CD8-positive, alpha-beta T cell (primary cell): ENCODE measurements at regions of chr16 and their contacts with region 1.

Region 1: GRCh38 chr16:67816240-67817031 is 9.7 kb downstream of the TSNAXIP1 start:
- DNase-seq: peak; percentile 79 to 96 (median 90)
- ATAC-seq: peak; percentile 99
- H3K4me3 ChIP-seq: no peak overlapping the region
- H3K4me3 Mint-ChIP-seq: peak overlapping the region; percentile 66
- H3K27ac ChIP-seq: no peak overlapping the region
- H3K27ac Mint-ChIP-seq: no peak overlapping the region
- H3K4me1 ChIP-seq: peaks cover 4% of the 10 kb centered on the region
- H3K4me1 Mint-ChIP-seq: peaks cover 5% of the 10 kb centered on the region
- H3K27me3 ChIP-seq: no peaks in the 10 kb centered on the region
- H3K27me3 Mint-ChIP-seq: no peaks in the 10 kb centered on the region
- CTCF ChIP-seq: peak; percentile 100

Region 2: DNA sequence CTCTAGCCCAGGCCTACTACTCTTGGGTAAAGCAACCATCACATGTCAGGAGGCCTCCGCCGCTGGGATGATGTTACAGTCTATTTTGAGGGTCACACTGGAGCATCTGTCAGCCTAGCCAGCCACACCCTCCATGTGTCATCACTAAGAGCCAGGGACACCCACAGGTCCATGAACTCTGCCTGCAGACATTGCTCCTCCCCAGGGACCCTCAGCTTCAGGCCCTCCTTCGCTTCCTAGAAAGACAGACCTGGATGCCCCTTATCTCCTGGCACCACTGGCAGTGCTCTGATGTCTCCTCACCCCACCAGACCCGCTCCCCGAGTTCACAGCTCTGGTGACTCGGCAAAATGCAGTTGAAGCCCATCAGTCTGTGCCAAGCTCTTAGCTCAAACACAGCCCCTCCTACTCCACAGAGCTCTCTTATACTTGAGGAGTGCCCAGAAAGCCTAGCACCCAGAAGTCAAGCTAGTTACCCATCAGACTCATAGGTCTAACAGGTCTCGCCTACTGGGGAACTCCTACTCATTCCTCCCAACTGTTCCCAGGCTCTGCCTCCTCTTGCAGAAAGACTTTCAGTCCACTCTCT is 16.0 kb before region 1 on chr16:
- CTCF ChIA-PET with region 1: interaction called, 48 read pairs
- POLR2A ChIA-PET with region 1: interaction called, 3 read pairs
- intact Hi-C with region 1: no loop called
- DNase-seq: no peak
- ATAC-seq: no peak
- H3K4me3 ChIP-seq: no peak overlapping the region
- H3K4me3 Mint-ChIP-seq: no peak overlapping the region
- H3K27ac ChIP-seq: no peak overlapping the region
- H3K27ac Mint-ChIP-seq: peak overlapping the region; percentile 25
- H3K4me1 ChIP-seq: peaks cover 41% of the 10 kb centered on the region
- H3K4me1 Mint-ChIP-seq: peaks cover 71% of the 10 kb centered on the region
- H3K27me3 ChIP-seq: no peaks in the 10 kb centered on the region
- H3K27me3 Mint-ChIP-seq: no peaks in the 10 kb centered on the region
- CTCF ChIP-seq: no peak

Region 3: GRCh38 chr16:67865316-67865715 is 48.9 kb after region 1 on chr16:
- CTCF ChIA-PET with region 1: interaction called, 18 read pairs
- POLR2A ChIA-PET with region 1: no interaction called
- intact Hi-C with region 1: loop called (anchors 1 kb)
- DNase-seq: peak in 2 of 9 experiments; percentile 40 to 51
- ATAC-seq: peak; percentile 61
- H3K4me3 ChIP-seq: no peak overlapping the region
- H3K4me3 Mint-ChIP-seq: no peak overlapping the region
- H3K27ac ChIP-seq: no peak overlapping the region
- H3K27ac Mint-ChIP-seq: no peak overlapping the region
- H3K4me1 ChIP-seq: no peaks in the 10 kb centered on the region
- H3K4me1 Mint-ChIP-seq: peaks cover 7% of the 10 kb centered on the region
- H3K27me3 ChIP-seq: no peaks in the 10 kb centered on the region
- H3K27me3 Mint-ChIP-seq: no peaks in the 10 kb centered on the region
- CTCF ChIP-seq: no peak

Region 4: GRCh38 chr16:68022704-68023522 is 206.5 kb after region 1 on chr16 and contains the starts of genes DDX28 and DUS2:
- CTCF ChIA-PET with region 1: interaction called, 10 read pairs
- POLR2A ChIA-PET with region 1: no interaction called
- intact Hi-C with region 1: no loop called
- DNase-seq: peak; percentile 89 to 98 (median 94)
- ATAC-seq: peak; percentile 95
- H3K4me3 ChIP-seq: peak within 1 kb of the TSS; percentile 92 to 97
- H3K4me3 Mint-ChIP-seq: peak within 1 kb of the TSS; percentile 98
- H3K27ac ChIP-seq: peak within 1 kb of the TSS; percentile 86 to 88
- H3K27ac Mint-ChIP-seq: peak within 1 kb of the TSS; percentile 95
- H3K4me1 ChIP-seq: peaks cover 28% of the 10 kb centered on the region
- H3K4me1 Mint-ChIP-seq: peaks cover 36% of the 10 kb centered on the region
- H3K27me3 ChIP-seq: no peaks in the 10 kb centered on the region
- H3K27me3 Mint-ChIP-seq: no peaks in the 10 kb centered on the region
- CTCF ChIP-seq: no peak
- total RNA-seq, gene DDX28: 18.5 to 20.9 TPM
- total RNA-seq, gene DUS2: 9.5 TPM

Region 5: GRCh38 chr16:68229431-68230198 is 413.2 kb after region 1 on chr16:
- CTCF ChIA-PET with region 1: no interaction called
- POLR2A ChIA-PET with region 1: no interaction called
- intact Hi-C with region 1: loop called in 1 of 2 experiments (anchors 1 kb)
- DNase-seq: peak in 6 of 9 experiments; percentile 36 to 72 (median 56)
- ATAC-seq: peak; percentile 64
- H3K4me3 ChIP-seq: no peak overlapping the region
- H3K4me3 Mint-ChIP-seq: no peak overlapping the region
- H3K27ac ChIP-seq: no peak overlapping the region
- H3K27ac Mint-ChIP-seq: peak overlapping the region; percentile 53
- H3K4me1 ChIP-seq: peaks cover 20% of the 10 kb centered on the region
- H3K4me1 Mint-ChIP-seq: peaks cover 41% of the 10 kb centered on the region
- H3K27me3 ChIP-seq: no peaks in the 10 kb centered on the region
- H3K27me3 Mint-ChIP-seq: no peaks in the 10 kb centered on the region
- CTCF ChIP-seq: peak; percentile 81